GM23248 (cell line): ENCODE measurements at regions of chr13 and their contacts with region 1.

Region 1: GRCh38 chr13:67230404-67231288 is 510 bp upstream of the PCDH9 start:
- DNase-seq: peak; percentile 96
- H3K4me3 ChIP-seq: peak overlapping the region; percentile 83
- H3K27ac ChIP-seq: 0 out of 2 replicates have a peak overlapping the region, but pooled peaks have one; percentile 2
- H3K4me1 ChIP-seq: peaks cover 7% of the 10 kb centered on the region; the same call in 1 of the 2 replicates
- H3K27me3 ChIP-seq: no peaks in the 10 kb centered on the region

Region 2: DNA sequence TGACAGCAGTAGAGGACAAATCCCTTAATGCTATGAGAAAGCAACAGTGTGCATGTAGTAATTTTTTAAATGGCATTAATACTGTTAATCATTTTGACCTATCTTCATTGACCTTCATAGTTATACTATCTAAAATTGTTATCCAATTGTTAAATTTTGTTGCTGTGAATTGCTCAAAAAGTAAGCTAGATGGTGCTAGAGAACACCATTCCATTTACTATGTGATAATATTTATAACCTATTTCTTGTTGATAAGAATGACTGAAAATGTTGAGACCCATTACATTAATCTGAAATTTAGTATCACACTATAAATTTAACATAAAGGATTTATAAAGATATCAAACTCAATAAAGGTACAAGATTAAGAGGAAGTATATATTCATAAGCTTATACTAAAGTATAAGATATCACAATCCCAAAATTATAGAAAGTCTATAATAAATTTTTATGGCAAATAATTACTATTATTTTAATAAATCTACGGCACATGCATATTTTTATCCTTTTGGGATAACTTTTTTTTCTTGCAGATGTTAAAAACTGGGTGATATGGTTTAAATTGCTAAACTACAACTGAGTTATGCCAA is 1573.8 kb before region 1 on chr13:
- in situ Hi-C with region 1: loop called (anchors 25 kb)
- DNase-seq: peak; percentile 6
- H3K4me3 ChIP-seq: no peak overlapping the region
- H3K27ac ChIP-seq: no peak overlapping the region
- H3K4me1 ChIP-seq: no peaks in the 10 kb centered on the region
- H3K27me3 ChIP-seq: no peaks in the 10 kb centered on the region